ENCODE measurements at regions of chr2 and their contacts with region 1.

Region 1: DNA sequence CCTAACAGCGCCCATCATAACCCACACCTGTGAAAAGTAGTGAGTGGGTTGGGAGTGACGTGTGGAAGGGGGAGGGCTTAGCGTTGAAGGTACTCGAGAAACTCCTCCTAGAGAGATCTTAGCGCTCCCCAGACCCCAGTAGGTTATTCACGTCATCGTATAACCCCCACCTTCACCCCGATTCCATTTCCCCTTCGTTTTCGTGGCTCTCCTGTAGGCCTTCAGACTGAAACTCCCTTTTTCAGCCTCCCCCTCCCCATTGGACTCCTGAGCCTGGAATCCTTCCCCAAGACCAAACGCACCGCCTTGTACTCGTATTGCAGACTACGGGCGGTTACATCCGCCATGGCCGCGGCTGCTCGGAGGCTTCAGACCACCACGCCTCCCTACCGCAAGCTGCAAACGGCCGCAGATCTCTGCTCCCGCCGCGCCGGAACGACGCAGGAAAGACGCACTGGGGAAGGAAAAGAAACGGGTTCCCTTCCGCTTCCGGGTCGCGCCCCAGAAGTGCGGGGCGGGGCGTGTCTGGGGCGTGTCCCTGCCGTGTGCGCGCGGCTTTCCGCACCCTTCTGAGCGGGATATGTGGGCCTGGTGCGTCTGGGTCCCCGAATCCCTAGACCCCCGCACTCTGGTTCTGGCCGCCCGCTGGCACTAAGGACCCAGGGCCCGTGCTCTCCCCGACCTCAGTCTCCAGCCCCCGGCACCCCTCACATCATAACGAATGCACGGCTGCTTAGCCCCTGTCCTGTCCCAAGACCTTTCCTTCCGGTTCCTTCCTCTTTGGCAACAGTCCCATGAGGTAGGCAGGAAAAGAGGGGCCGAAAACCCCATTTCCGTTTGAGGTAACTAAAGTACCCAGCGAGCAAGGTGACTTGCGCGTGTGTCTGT is at the start of gene SNRNP200:
- DNase-seq: peak; percentile 69
- ATAC-seq: peak; percentile 96
- H3K4me3 ChIP-seq: peak within 1 kb of the TSS; percentile 77 to 97
- H3K27ac ChIP-seq: peak within 1 kb of the TSS; percentile 75
- H3K4me1 ChIP-seq: peaks cover 10 to 19% of the 10 kb centered on the region in 2 experiments
- H3K27me3 ChIP-seq: no peaks in the 10 kb centered on the region
- CTCF ChIP-seq: no peak
- POLR2A ChIP-seq: peak; percentile 83
- RAD21 ChIP-seq: 0 out of 2 replicates have a peak, but pooled peaks have one; percentile 11
- total RNA-seq, gene SNRNP200: 202 TPM

Region 2: GRCh38 chr2:96265840-96266679 is 39.3 kb before region 1 on chr2 and contains the starts of genes CIAO1 and TMEM127:
- CTCF ChIA-PET with region 1: no interaction called
- POLR2A ChIA-PET with region 1: no interaction called
- RAD21 ChIA-PET with region 1: no interaction called
- intact Hi-C with region 1: loop called (anchors 2 kb)
- DNase-seq: peak; percentile 90
- ATAC-seq: peak; percentile 96
- H3K4me3 ChIP-seq: peak within 1 kb of the TSS; percentile 89 to 93
- H3K27ac ChIP-seq: peak within 1 kb of the TSS; percentile 71
- H3K4me1 ChIP-seq: peaks cover 14 to 34% of the 10 kb centered on the region in 2 experiments
- H3K27me3 ChIP-seq: no peaks in the 10 kb centered on the region
- CTCF ChIP-seq: peak in 2 of 3 experiments; percentile 20 to 26; a peak in 2 of 6 replicates
- POLR2A ChIP-seq: peak; percentile 27
- RAD21 ChIP-seq: no peak
- total RNA-seq, gene CIAO1: 76.8 TPM
- total RNA-seq, gene TMEM127: 25.3 TPM

Region 3: GRCh38 chr2:96330407-96330806 is 25.1 kb after region 1 on chr2:
- CTCF ChIA-PET with region 1: no interaction called
- POLR2A ChIA-PET with region 1: interaction called, 3 read pairs
- RAD21 ChIA-PET with region 1: no interaction called
- intact Hi-C with region 1: loop called (anchors 1 kb)
- DNase-seq: no peak
- ATAC-seq: no peak
- H3K4me3 ChIP-seq: no peak overlapping the region
- H3K27ac ChIP-seq: no peak overlapping the region
- H3K4me1 ChIP-seq: peaks cover 4 to 20% of the 10 kb centered on the region in 2 experiments; a peak in 3 of 4 replicates
- H3K27me3 ChIP-seq: no peaks in the 10 kb centered on the region
- CTCF ChIP-seq: no peak
- POLR2A ChIP-seq: no peak
- RAD21 ChIP-seq: no peak

Measured in HCT116 (cell line).